ENCODE measurements at regions of chr16 and their contacts with region 1.

Region 1: GRCh38 chr16:19555162-19555937 is at the start of gene VPS35L:
- DNase-seq: peak; percentile 85 to 97 (median 96)
- H3K4me3 ChIP-seq: peak within 1 kb of the TSS; percentile 65 to 99 (median 90)
- H3K27ac ChIP-seq: peak within 1 kb of the TSS; percentile 72 to 99 (median 96)
- H3K27me3 ChIP-seq: no peaks in the 10 kb centered on the region
- CTCF ChIP-seq: peak; percentile 60 to 91 (median 79)
- total RNA-seq, gene VPS35L: 61.8 to 152 (median 97.7) TPM

Region 2: GRCh38 chr16:19521471-19522396 is 33.6 kb before region 1 on chr16 and contains the start of gene GDE1:
- intact Hi-C with region 1: loop called (anchors 1 to 2 kb)
- DNase-seq: peak; percentile 98 to 99 (median 98)
- H3K4me3 ChIP-seq: peak within 1 kb of the TSS; percentile 50 to 99 (median 92)
- H3K27ac ChIP-seq: peak within 1 kb of the TSS; percentile 18 to 99 (median 89)
- H3K27me3 ChIP-seq: no peaks in the 10 kb centered on the region
- CTCF ChIP-seq: peak in 49 of 56 donors; percentile 18 to 70 (median 48)
- total RNA-seq, gene GDE1: 35.8 to 104 (median 76.3) TPM

Region 3: GRCh38 chr16:19717771-19718602 is 162.6 kb after region 1 on chr16 and contains the starts of genes IQCK and KNOP1:
- intact Hi-C with region 1: loop called in 1 of 2 experiments (anchors 5 kb)
- DNase-seq: peak; percentile 77 to 93 (median 88)
- H3K4me3 ChIP-seq: peak within 1 kb of the TSS; percentile 64 to 100 (median 95)
- H3K27ac ChIP-seq: peak within 1 kb of the TSS in 56 of 59 donors; percentile 7 to 87 (median 72)
- H3K27me3 ChIP-seq: no peaks in the 10 kb centered on the region
- CTCF ChIP-seq: peak in 19 of 56 donors; percentile 6 to 41 (median 23)
- total RNA-seq, gene IQCK: 13.2 to 40.2 (median 23.3) TPM
- total RNA-seq, gene KNOP1: 13.0 to 94.8 (median 30.2) TPM

Region 4: GRCh38 chr16:20383106-20384029 is 828.0 kb after region 1 on chr16:
- intact Hi-C with region 1: loop called in 1 of 2 experiments (anchors 5 kb)
- DNase-seq: peak in 8 of 10 donors; percentile 41 to 74 (median 56)
- H3K4me3 ChIP-seq: no peak overlapping the region
- H3K27ac ChIP-seq: no peak overlapping the region
- H3K27me3 ChIP-seq: peaks cover 0 to 16% (median 0%) of the 10 kb centered on the region in 45 donors
- CTCF ChIP-seq: peak; percentile 54 to 93 (median 84)

Region 5: DNA sequence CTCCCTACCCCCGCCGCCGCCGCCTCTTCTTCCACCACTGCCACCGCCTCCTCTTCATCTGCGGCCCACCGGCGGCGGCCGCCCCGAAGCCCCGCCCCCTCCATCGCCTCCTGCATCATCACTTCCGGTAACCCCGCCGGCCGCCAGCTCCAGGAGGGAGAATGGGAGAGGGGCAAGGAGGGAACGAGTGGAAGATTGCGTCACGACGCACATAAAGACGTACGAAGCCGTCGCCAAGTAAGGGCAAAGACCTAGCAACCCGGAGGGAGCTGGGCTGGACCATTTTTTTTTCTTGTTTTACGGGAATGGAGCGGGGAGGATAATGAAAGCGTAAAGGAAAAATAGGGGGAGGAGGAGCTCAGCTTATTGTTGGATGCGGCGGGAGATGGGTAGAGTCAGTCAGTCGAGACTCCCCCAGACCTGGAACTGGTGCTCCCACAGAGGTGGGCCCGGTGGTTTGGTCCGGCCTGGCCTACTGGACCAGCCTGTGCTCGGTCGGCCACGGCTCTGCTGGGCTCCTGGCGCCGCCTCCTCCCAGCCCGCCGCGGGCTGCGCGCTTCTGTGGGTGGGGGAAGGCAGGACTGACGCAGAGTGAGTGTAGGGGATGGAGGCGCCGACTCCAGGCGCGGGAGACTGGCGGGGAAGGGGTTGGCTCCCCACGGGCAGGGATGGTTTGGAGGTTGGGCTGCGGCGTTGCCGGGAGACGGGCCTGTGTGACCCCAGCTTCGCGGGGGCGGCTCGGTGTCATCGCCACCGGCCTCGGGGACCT is 1345.1 kb after region 1 on chr16 and contains the starts of genes DCUN1D3 and LYRM1:
- intact Hi-C with region 1: loop called in 1 of 2 experiments (anchors 10 kb)
- DNase-seq: peak; percentile 88 to 98 (median 96)
- H3K4me3 ChIP-seq: peak within 1 kb of the TSS; percentile 70 to 98 (median 89)
- H3K27ac ChIP-seq: peak within 1 kb of the TSS; percentile 82 to 99 (median 97)
- H3K27me3 ChIP-seq: no peaks in the 10 kb centered on the region
- CTCF ChIP-seq: peak in 3 of 56 donors; percentile 7 to 9 (median 9)
- total RNA-seq, gene DCUN1D3: 9.7 to 23.3 (median 14.8) TPM
- total RNA-seq, gene LYRM1: 15.4 to 38.4 (median 24.8) TPM